ENCODE measurements at regions of chr1 and their contacts with region 1.

Region 1: DNA sequence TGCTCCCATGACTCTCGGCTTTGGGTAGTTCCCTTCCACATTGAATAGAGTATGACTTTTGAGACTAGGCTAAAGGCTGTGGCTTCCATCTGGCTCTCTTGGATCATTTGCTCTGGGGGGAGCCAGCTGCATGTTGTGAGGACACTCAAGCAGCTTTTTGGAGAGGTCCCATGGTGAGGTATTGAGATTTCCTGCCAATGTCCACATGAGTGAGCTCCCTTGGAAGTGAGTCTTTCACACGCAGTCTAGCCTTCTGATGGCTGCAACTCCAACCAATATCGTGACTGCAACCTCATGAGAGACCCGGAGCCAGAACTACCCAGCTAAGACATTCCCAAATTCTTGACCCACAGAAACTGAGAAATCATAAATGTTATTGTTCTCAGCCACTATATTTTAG is 127.7 kb upstream of the KAZN start:
- DNase-seq: no peak
- H3K4me3 ChIP-seq: no peak overlapping the region
- H3K27ac ChIP-seq: no peak overlapping the region
- H3K4me1 ChIP-seq: no peaks in the 10 kb centered on the region
- H3K27me3 ChIP-seq: no peaks in the 10 kb centered on the region
- CTCF ChIP-seq: no peak

Region 2: GRCh38 chr1:14254251-14254650 is 216.6 kb before region 1 on chr1:
- intact Hi-C with region 1: no loop called
- DNase-seq: no peak
- H3K4me3 ChIP-seq: no peak overlapping the region
- H3K27ac ChIP-seq: no peak overlapping the region
- H3K4me1 ChIP-seq: no peaks in the 10 kb centered on the region
- H3K27me3 ChIP-seq: no peaks in the 10 kb centered on the region
- CTCF ChIP-seq: no peak

Region 3: DNA sequence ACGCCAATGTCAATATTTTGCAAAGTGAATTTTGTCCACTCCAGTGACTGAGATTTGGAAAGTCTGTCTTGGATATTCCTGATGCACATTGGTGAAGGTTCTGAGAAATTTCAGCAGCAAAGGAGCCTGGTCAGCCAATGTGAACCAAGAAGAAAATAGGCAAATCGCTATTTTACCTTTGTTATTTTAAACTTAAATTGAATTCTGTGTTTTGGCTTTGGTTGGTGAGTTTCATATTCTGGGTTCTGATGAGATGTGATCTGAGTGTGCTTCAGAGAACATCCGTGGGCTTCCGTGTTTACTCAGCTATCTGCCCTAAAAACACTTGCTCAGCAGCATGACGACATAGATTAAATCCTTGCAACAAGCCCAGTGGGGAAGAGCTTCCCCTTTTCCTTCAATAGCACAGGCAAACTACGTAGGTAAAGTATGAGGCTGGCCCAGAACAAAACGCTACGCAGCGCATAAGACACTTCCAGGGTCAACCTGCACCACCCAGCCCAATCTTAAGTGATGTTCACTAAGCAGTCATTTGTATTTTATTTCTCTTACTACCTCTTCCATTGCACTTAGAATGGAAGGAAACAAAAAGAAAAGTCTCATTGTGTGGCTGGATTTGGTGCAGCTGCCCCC is 48.7 kb before region 1 on chr1:
- intact Hi-C with region 1: no loop called
- DNase-seq: no peak
- H3K4me3 ChIP-seq: no peak overlapping the region
- H3K27ac ChIP-seq: no peak overlapping the region
- H3K4me1 ChIP-seq: no peaks in the 10 kb centered on the region
- H3K27me3 ChIP-seq: no peaks in the 10 kb centered on the region
- CTCF ChIP-seq: no peak

Region 4: GRCh38 chr1:14742181-14742980 is 271.6 kb after region 1 on chr1:
- intact Hi-C with region 1: loop called (anchors 5 kb)
- DNase-seq: no peak
- H3K4me3 ChIP-seq: no peak overlapping the region
- H3K27ac ChIP-seq: no peak overlapping the region
- H3K4me1 ChIP-seq: no peaks in the 10 kb centered on the region
- H3K27me3 ChIP-seq: no peaks in the 10 kb centered on the region
- CTCF ChIP-seq: no peak

Region 5: GRCh38 chr1:14881775-14882672 is 411.2 kb after region 1 on chr1:
- intact Hi-C with region 1: no loop called
- DNase-seq: no peak
- H3K4me3 ChIP-seq: no peak overlapping the region
- H3K27ac ChIP-seq: no peak overlapping the region
- H3K4me1 ChIP-seq: no peaks in the 10 kb centered on the region
- H3K27me3 ChIP-seq: no peaks in the 10 kb centered on the region
- CTCF ChIP-seq: no peak